CD8-positive, alpha-beta memory T cell (primary cell): ENCODE measurements at regions of chr2 and their contacts with region 1.

Region 1: GRCh38 chr2:177332041-177332991 is 60.3 kb upstream of the AGPS start:
- DNase-seq: peak in 3 of 5 donors; percentile 1 to 63 (median 37)
- H3K4me3 ChIP-seq: no peak overlapping the region
- H3K4me3 Mint-ChIP-seq: peak overlapping the region in 1 of 7 donors; percentile 23
- H3K27ac ChIP-seq: no peak overlapping the region
- H3K27ac Mint-ChIP-seq: no peak overlapping the region
- H3K4me1 ChIP-seq: peaks cover 23% of the 10 kb centered on the region
- H3K4me1 Mint-ChIP-seq: peaks cover 3 to 5% (median 4%) of the 10 kb centered on the region in 3 donors
- H3K27me3 ChIP-seq: no peaks in the 10 kb centered on the region
- H3K27me3 Mint-ChIP-seq: no peaks in the 10 kb centered on the region

Region 2: GRCh38 chr2:177281400-177282180 is 50.7 kb before region 1 on chr2:
- CTCF ChIA-PET with region 1: no interaction called
- POLR2A ChIA-PET with region 1: no interaction called
- DNase-seq: no peak
- H3K4me3 ChIP-seq: no peak overlapping the region
- H3K4me3 Mint-ChIP-seq: no peak overlapping the region
- H3K27ac ChIP-seq: no peak overlapping the region
- H3K27ac Mint-ChIP-seq: peak overlapping the region in 1 of 8 donors; percentile 69
- H3K4me1 ChIP-seq: no peaks in the 10 kb centered on the region
- H3K4me1 Mint-ChIP-seq: peaks cover 0 to 4% (median 0%) of the 10 kb centered on the region in 3 donors
- H3K27me3 ChIP-seq: no peaks in the 10 kb centered on the region
- H3K27me3 Mint-ChIP-seq: no peaks in the 10 kb centered on the region

Region 3: GRCh38 chr2:177413703-177414102 is 81.4 kb after region 1 on chr2:
- CTCF ChIA-PET with region 1: interaction called, 54 read pairs
- POLR2A ChIA-PET with region 1: no interaction called
- DNase-seq: no peak
- H3K4me3 ChIP-seq: no peak overlapping the region
- H3K4me3 Mint-ChIP-seq: no peak overlapping the region
- H3K27ac ChIP-seq: no peak overlapping the region
- H3K27ac Mint-ChIP-seq: peak overlapping the region in 3 of 8 donors; percentile 2 to 21 (median 8)
- H3K4me1 ChIP-seq: no peaks in the 10 kb centered on the region
- H3K4me1 Mint-ChIP-seq: peaks cover 30 to 56% (median 41%) of the 10 kb centered on the region in 3 donors
- H3K27me3 ChIP-seq: no peaks in the 10 kb centered on the region
- H3K27me3 Mint-ChIP-seq: no peaks in the 10 kb centered on the region